ENCODE measurements at regions of chr1 and their contacts with region 1.

Region 1: GRCh38 chr1:207711285-207711684 is 40.6 kb upstream of the CD46 start:
- DNase-seq: peak in 2 of 4 experiments; percentile 63 to 69
- ATAC-seq: peak; percentile 91
- H3K4me3 ChIP-seq: no peak overlapping the region
- H3K27ac ChIP-seq: no peak overlapping the region
- H3K4me1 ChIP-seq: 0 out of 5 replicates have a peak, but pooled peaks cover 0 to 4% of the 10 kb centered on the region in 2 experiments
- H3K27me3 ChIP-seq: no peaks in the 10 kb centered on the region
- CTCF ChIP-seq: peak; percentile 35 to 62 (median 55); a peak in 4 of 6 replicates
- EP300 ChIP-seq: no peak
- POLR2A ChIP-seq: no peak
- RAD21 ChIP-seq: peak; percentile 63 to 83

Region 2: DNA sequence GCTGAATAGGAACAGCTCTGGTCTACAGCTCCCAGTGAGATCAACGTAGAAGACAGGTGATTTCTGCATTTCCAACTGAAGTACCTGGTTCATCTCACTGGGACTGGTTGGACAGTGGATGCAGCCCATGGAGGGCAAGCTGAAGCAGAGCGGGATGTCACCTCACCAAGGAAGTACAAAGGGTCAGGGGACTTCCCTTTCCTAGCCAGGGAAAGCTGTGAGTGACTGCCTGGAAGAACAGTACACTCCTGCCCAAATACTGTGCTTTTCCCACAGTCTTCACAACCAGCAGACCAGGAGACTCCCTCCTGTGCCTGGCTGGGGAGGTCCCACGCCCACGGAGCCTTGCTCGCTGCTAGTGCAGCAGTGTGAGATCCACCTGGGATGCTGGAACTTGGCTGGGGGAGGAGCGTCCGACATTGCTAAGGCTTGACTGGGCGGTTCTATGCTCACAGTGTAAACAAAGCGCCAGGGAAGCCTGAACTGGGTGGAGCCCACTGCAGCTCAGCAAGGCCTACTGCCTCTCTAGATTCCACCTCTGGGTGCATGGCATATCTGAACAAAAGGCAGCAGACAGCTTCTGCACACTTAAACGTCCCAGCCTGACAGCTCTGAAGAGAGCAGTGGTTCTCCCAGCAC is 51.6 kb before region 1 on chr1:
- CTCF ChIA-PET with region 1: no interaction called
- POLR2A ChIA-PET with region 1: no interaction called
- in situ Hi-C with region 1: no loop called
- intact Hi-C with region 1: no loop called
- DNase-seq: no peak
- ATAC-seq: peak; percentile 76
- H3K4me3 ChIP-seq: no peak overlapping the region
- H3K27ac ChIP-seq: no peak overlapping the region
- H3K4me1 ChIP-seq: peaks cover 0 to 11% of the 10 kb centered on the region in 2 experiments; a peak in 2 of 5 replicates
- H3K27me3 ChIP-seq: no peaks in the 10 kb centered on the region
- CTCF ChIP-seq: no peak
- EP300 ChIP-seq: no peak
- POLR2A ChIP-seq: no peak
- RAD21 ChIP-seq: no peak

Region 3: DNA sequence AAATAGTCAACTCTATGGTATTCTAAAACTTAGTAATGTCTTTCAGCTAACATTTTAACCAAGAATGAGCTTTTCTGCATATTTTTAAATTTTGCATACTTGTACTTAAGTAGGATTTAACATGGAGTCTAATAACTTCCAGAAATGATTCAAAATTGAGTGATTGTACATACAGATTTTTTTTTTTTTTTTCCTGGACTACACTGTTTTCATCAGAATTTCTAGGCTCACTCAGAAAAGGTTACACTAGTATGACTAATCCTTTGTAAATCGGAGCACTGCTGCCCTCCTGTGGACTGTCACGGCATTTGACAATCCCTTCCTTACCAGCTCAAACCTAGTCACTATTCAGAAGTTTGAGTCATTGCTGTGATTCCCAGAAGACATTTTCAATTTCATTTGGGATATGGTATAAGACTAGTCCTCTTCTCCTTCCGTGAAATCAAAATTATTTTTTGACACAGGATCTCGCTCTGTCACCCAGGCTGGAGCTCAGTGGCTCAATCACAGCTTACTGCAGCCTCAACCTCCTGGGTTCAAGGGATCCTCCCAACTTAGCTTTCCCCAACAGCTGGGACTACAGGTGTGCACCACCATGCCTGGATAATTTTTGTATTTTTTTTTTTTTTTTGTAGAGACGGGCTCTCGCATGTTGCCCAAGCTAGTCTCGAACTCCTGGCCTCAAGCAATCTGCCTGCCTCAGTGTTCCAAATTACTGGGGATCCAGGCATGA is 86.1 kb after region 1 on chr1:
- CTCF ChIA-PET with region 1: interaction called, 13 read pairs
- POLR2A ChIA-PET with region 1: no interaction called
- in situ Hi-C with region 1: no loop called
- intact Hi-C with region 1: loop called (anchors 1 kb)
- DNase-seq: peak; percentile 74 to 88 (median 79)
- ATAC-seq: peak; percentile 96
- H3K4me3 ChIP-seq: no peak overlapping the region
- H3K27ac ChIP-seq: no peak overlapping the region
- H3K4me1 ChIP-seq: no peaks in the 10 kb centered on the region
- H3K27me3 ChIP-seq: no peaks in the 10 kb centered on the region
- CTCF ChIP-seq: peak; percentile 77 to 91 (median 87)
- EP300 ChIP-seq: no peak
- POLR2A ChIP-seq: no peak; the same call in none of the 2 replicates
- RAD21 ChIP-seq: peak; percentile 85 to 87

Region 4: GRCh38 chr1:207876131-207876530 is 164.8 kb after region 1 on chr1:
- CTCF ChIA-PET with region 1: no interaction called
- POLR2A ChIA-PET with region 1: no interaction called
- in situ Hi-C with region 1: no loop called
- intact Hi-C with region 1: loop called (anchors 1 kb)
- DNase-seq: peak; percentile 52 to 69 (median 60)
- ATAC-seq: peak; percentile 86
- H3K4me3 ChIP-seq: no peak overlapping the region
- H3K27ac ChIP-seq: no peak overlapping the region
- H3K4me1 ChIP-seq: peaks cover 17 to 24% of the 10 kb centered on the region in 2 experiments
- H3K27me3 ChIP-seq: no peaks in the 10 kb centered on the region
- CTCF ChIP-seq: peak; percentile 76 to 83 (median 78)
- EP300 ChIP-seq: no peak
- POLR2A ChIP-seq: no peak
- RAD21 ChIP-seq: peak; percentile 70 to 83